ENCODE measurements at regions of chr10 and their contacts with region 1.

Region 1: DNA sequence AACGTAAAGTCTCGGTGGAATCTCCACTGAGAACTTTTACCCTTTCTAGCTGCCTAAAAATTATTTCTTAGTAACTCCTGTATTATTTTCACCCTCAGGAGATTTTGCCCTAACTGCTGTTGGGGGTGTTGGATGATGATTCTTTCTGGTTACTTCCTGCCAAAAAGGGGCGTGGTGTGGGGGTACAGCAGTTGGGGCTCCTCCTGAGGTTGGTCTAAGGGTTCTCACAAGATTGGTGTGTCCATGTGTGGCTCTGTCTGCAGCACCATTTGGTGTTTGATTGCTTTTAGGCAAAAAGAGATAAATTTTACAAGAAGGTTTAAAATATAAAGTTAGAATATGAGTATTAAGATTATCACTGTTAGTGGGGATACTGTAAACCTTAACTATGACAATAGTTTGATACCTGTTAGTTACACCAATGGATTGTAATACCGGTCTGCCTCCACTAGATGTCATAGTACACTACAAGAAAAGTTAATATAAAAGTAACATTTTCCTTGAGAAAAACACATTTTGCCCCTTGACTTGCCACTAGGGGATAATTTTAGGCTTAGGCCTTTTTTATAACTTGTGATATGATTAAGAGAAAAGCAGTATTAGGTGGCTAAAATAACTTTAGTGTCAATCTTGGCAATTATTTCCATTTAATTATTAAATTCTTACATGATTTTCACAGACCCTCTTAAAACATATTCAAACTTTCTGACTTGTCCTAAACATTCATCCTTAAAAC is 928.7 kb downstream of the IPMK start:
- DNase-seq: no peak
- H3K4me3 ChIP-seq: no peak overlapping the region
- H3K27ac ChIP-seq: no peak overlapping the region
- H3K4me1 ChIP-seq: no peaks in the 10 kb centered on the region
- H3K27me3 ChIP-seq: no peaks in the 10 kb centered on the region
- CTCF ChIP-seq: peak in 3 of 4 experiments; percentile 53 to 59 (median 56)
- POLR2A ChIP-seq: no peak

Region 2: DNA sequence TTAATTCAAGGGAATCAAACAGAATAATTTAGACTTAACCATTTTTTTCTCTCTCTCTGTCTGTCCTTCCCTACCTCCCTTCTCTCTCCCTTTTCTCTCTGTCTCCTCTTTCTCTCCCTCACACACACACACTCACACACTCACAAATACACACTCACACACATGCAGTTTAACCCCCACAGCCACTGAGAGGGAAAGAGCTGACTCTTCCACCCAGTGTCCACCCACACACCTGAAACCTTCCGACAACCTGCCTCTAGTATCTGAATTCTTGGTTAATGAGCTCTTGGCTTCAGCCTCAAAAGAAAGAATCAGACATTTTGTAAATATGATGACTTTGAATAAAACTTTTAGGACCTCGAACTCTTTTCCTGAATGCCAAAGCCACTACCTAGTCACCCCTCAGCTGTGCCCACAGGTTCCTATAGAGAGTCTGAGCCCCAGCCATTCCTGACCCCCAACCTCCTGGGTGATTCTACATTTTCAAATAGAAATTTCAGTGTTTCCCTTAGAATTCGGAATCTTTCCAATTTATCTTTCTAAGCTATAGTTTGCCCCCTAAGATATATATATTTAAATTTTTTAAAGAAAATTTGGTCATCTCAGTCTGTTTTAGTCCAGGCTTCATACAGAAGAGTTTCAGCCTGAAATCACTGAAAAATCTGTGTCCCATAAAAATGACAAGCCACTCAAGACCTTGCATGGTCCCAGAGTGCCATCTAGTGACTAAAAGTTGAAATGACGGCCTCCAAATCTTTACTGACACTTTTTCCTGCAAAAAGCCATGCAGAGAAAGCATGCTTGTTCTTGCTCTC is 725.9 kb after region 1 on chr10:
- intact Hi-C with region 1: loop called (anchors 10 kb)
- DNase-seq: no peak
- H3K4me3 ChIP-seq: no peak overlapping the region
- H3K27ac ChIP-seq: no peak overlapping the region
- H3K4me1 ChIP-seq: no peaks in the 10 kb centered on the region
- H3K27me3 ChIP-seq: no peaks in the 10 kb centered on the region
- CTCF ChIP-seq: peak in 3 of 4 experiments; percentile 41 to 52 (median 46)
- POLR2A ChIP-seq: no peak